ENCODE measurements at regions of chr6 and their contacts with region 1.

Region 1: GRCh38 chr6:104525677-104526312 is 333.9 kb downstream of the HACE1 start:
- DNase-seq: peak; percentile 79
- ATAC-seq: peak; percentile 93
- H3K4me3 Mint-ChIP-seq: peak overlapping the region; percentile 53
- H3K27ac Mint-ChIP-seq: no peak overlapping the region
- H3K4me1 Mint-ChIP-seq: peaks cover 4% of the 10 kb centered on the region
- H3K27me3 Mint-ChIP-seq: peaks cover 11% of the 10 kb centered on the region

Region 2: GRCh38 chr6:103769431-103769830 is 756.4 kb before region 1 on chr6:
- CTCF ChIA-PET with region 1: no interaction called
- POLR2A ChIA-PET with region 1: no interaction called
- DNase-seq: no peak
- ATAC-seq: no peak
- H3K4me3 Mint-ChIP-seq: no peak overlapping the region
- H3K27ac Mint-ChIP-seq: no peak overlapping the region
- H3K4me1 Mint-ChIP-seq: no peaks in the 10 kb centered on the region
- H3K27me3 Mint-ChIP-seq: no peaks in the 10 kb centered on the region

Region 3: GRCh38 chr6:104449918-104450317 is 75.9 kb before region 1 on chr6:
- CTCF ChIA-PET with region 1: no interaction called
- POLR2A ChIA-PET with region 1: no interaction called
- DNase-seq: no peak
- ATAC-seq: no peak
- H3K4me3 Mint-ChIP-seq: no peak overlapping the region
- H3K27ac Mint-ChIP-seq: no peak overlapping the region
- H3K4me1 Mint-ChIP-seq: no peaks in the 10 kb centered on the region
- H3K27me3 Mint-ChIP-seq: no peaks in the 10 kb centered on the region

Region 4: DNA sequence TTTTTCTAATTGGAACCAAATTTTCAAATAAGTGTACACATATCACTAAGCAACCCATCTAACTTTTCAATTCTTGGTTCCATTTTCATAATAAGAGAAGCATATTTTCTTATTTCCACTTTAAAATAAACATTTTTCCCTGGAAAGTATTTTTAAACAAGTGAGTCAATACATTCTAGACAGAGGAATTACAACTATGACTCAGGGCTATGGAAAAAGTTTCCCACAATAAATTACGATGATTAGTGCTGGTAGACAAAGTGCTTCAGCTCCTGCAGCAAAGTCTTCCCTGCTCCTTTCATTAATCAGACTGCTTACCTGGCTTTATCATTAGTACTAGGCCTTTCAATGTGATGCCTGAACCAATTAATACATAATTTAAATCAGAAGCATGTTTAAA is 11.4 kb after region 1 on chr6:
- CTCF ChIA-PET with region 1: interaction called, 16 read pairs
- POLR2A ChIA-PET with region 1: no interaction called
- DNase-seq: no peak
- ATAC-seq: no peak
- H3K4me3 Mint-ChIP-seq: no peak overlapping the region
- H3K27ac Mint-ChIP-seq: no peak overlapping the region
- H3K4me1 Mint-ChIP-seq: no peaks in the 10 kb centered on the region
- H3K27me3 Mint-ChIP-seq: peaks cover 2% of the 10 kb centered on the region

Measured in activated CD8-positive, alpha-beta T cell treated with anti-CD3 and anti-CD28 coated beads, Interleukin-2, amount 10 ng/mL, durations not matched to agents 7 days and 5 days (primary cell).